Activated naive CD4-positive, alpha-beta T cell treated with anti-CD3 and anti-CD28 coated beads for 36 hours (primary cell): ENCODE measurements at regions of chr16 and their contacts with region 1.

Region 1: GRCh38 chr16:807347-808084 is 7.0 kb upstream of the GNG13 start:
- DNase-seq: peak; percentile 91
- H3K4me3 Mint-ChIP-seq: peak overlapping the region; percentile 98
- H3K27ac Mint-ChIP-seq: peak overlapping the region; percentile 88
- H3K4me1 Mint-ChIP-seq: peaks cover 11% of the 10 kb centered on the region
- H3K27me3 Mint-ChIP-seq: no peaks in the 10 kb centered on the region

Region 2: GRCh38 chr16:970766-971581 is 163.5 kb after region 1 on chr16 and contains the start of gene LMF1:
- CTCF ChIA-PET with region 1: no interaction called
- intact Hi-C with region 1: loop called (anchors 10 kb)
- DNase-seq: peak; percentile 96
- H3K4me3 Mint-ChIP-seq: peak within 1 kb of the TSS; percentile 78
- H3K27ac Mint-ChIP-seq: peak within 1 kb of the TSS; percentile 41
- H3K4me1 Mint-ChIP-seq: peaks cover 21% of the 10 kb centered on the region
- H3K27me3 Mint-ChIP-seq: no peaks in the 10 kb centered on the region
- total RNA-seq, gene LMF1: 11.5 to 12.3 TPM